ENCODE measurements at regions of chr1 and their contacts with region 1.

Region 1: GRCh38 chr1:191074881-191075280 is 597.2 kb upstream of the BRINP3 start:
- DNase-seq: no peak
- ATAC-seq: no peak
- H3K4me3 ChIP-seq: no peak overlapping the region
- H3K4me3 Mint-ChIP-seq: no peak overlapping the region
- H3K27ac ChIP-seq: no peak overlapping the region
- H3K27ac Mint-ChIP-seq: no peak overlapping the region
- H3K4me1 ChIP-seq: no peaks in the 10 kb centered on the region
- H3K4me1 Mint-ChIP-seq: no peaks in the 10 kb centered on the region
- H3K27me3 ChIP-seq: no peaks in the 10 kb centered on the region
- H3K27me3 Mint-ChIP-seq: no peaks in the 10 kb centered on the region
- CTCF ChIP-seq: no peak

Region 2: GRCh38 chr1:191052888-191053287 is 22.0 kb before region 1 on chr1:
- CTCF ChIA-PET with region 1: no interaction called
- POLR2A ChIA-PET with region 1: no interaction called
- intact Hi-C with region 1: loop called in 1 of 2 experiments (anchors 2 kb)
- DNase-seq: no peak
- ATAC-seq: no peak
- H3K4me3 ChIP-seq: no peak overlapping the region
- H3K4me3 Mint-ChIP-seq: no peak overlapping the region
- H3K27ac ChIP-seq: no peak overlapping the region
- H3K27ac Mint-ChIP-seq: no peak overlapping the region
- H3K4me1 ChIP-seq: no peaks in the 10 kb centered on the region
- H3K4me1 Mint-ChIP-seq: no peaks in the 10 kb centered on the region
- H3K27me3 ChIP-seq: no peaks in the 10 kb centered on the region
- H3K27me3 Mint-ChIP-seq: no peaks in the 10 kb centered on the region
- CTCF ChIP-seq: no peak

Region 3: GRCh38 chr1:191255354-191256054 is 180.6 kb after region 1 on chr1:
- CTCF ChIA-PET with region 1: no interaction called
- POLR2A ChIA-PET with region 1: no interaction called
- intact Hi-C with region 1: no loop called
- DNase-seq: no peak
- ATAC-seq: no peak
- H3K4me3 ChIP-seq: no peak overlapping the region
- H3K4me3 Mint-ChIP-seq: no peak overlapping the region
- H3K27ac ChIP-seq: no peak overlapping the region
- H3K27ac Mint-ChIP-seq: no peak overlapping the region
- H3K4me1 ChIP-seq: no peaks in the 10 kb centered on the region
- H3K4me1 Mint-ChIP-seq: no peaks in the 10 kb centered on the region
- H3K27me3 ChIP-seq: no peaks in the 10 kb centered on the region
- H3K27me3 Mint-ChIP-seq: no peaks in the 10 kb centered on the region
- CTCF ChIP-seq: no peak

Measured in CD4-positive, alpha-beta T cell (primary cell).